Endothelial cell of umbilical vein (primary cell): ENCODE measurements at regions of chr2 and their contacts with region 1.

Region 1: DNA sequence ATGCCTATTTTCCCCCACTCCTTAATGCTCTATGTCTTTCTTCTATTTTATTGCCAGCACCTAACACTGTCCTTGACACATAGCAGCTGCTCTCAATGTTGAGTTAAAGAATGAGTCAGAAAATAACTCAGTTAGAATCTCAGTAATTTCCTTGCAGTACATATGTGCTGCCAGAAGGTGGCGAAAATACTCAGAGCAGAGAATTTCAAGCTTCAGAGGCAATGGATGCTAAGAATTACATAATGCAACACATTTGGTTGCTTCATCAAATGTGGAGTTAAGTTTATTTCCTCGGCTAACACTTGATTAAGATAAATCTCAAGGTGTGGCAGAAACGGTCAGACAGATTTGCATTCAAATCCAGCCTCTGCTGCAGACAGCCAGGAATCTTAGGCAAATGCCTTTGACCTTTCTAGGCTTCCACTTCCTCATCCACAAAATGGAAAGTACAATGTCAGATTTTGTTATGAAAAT is 105.6 kb downstream of the VSNL1 start:
- DNase-seq: peak; percentile 77
- H3K4me3 ChIP-seq: no peak overlapping the region
- H3K27ac ChIP-seq: no peak overlapping the region
- H3K4me1 ChIP-seq: peaks cover 8% of the 10 kb centered on the region
- H3K27me3 ChIP-seq: no peaks in the 10 kb centered on the region
- CTCF ChIP-seq: peak; percentile 53 to 59
- POLR2A ChIP-seq: no peak

Region 2: GRCh38 chr2:16773080-16773713 is 872.9 kb before region 1 on chr2:
- CTCF ChIA-PET with region 1: interaction called, 5 read pairs
- POLR2A ChIA-PET with region 1: no interaction called
- dilution Hi-C with region 1: no loop called
- intact Hi-C with region 1: loop called (anchors 10 kb)
- DNase-seq: peak; percentile 34
- H3K4me3 ChIP-seq: no peak overlapping the region
- H3K27ac ChIP-seq: no peak overlapping the region
- H3K4me1 ChIP-seq: no peaks in the 10 kb centered on the region
- H3K27me3 ChIP-seq: no peaks in the 10 kb centered on the region
- CTCF ChIP-seq: peak; percentile 31 to 38
- POLR2A ChIP-seq: no peak

Region 3: DNA sequence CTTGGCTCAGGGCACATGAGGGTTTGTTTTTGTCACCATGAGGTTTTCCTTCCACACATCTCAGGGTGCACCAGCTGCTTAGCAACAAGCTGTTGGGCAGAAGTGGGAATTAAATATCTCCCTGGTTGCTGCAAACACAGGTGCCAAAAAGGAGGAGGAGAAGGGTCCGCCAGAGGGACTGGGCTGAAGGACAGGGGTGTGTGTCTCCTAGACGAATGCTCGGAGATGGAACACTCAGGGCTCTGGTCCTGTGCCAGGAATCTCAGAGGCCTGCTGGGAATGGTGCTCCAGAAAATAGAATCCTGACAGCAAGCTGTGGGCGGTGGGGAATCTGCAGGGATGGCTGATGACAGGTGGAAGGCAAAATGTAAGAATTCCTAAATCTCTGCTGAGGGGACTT is 11.1 kb before region 1 on chr2:
- CTCF ChIA-PET with region 1: interaction called, 34 read pairs
- POLR2A ChIA-PET with region 1: no interaction called
- dilution Hi-C with region 1: no loop called
- intact Hi-C with region 1: no loop called
- DNase-seq: no peak
- H3K4me3 ChIP-seq: no peak overlapping the region
- H3K27ac ChIP-seq: no peak overlapping the region
- H3K4me1 ChIP-seq: no peaks in the 10 kb centered on the region
- H3K27me3 ChIP-seq: no peaks in the 10 kb centered on the region
- CTCF ChIP-seq: no peak
- POLR2A ChIP-seq: no peak

Region 4: DNA sequence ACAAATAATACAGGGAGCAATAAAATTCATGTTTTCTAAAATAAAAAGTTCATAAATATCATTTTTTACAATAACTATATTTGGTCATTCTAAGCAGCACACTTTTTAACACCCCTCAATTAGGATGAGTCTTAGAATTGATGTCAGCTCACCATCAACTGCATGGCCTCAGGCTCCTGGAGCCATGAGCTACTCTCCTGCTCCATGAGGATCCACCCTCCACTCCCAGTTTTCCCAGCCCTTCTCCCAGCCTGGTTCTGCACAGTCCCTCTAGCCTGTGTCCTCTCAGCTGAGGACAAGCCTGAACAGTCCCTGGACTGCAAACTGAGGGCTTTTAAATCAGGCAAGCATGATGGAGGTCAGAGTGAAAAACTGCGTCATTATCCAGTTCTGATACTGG is 18.4 kb after region 1 on chr2:
- CTCF ChIA-PET with region 1: interaction called, 296 read pairs
- POLR2A ChIA-PET with region 1: no interaction called
- dilution Hi-C with region 1: no loop called
- intact Hi-C with region 1: no loop called
- DNase-seq: no peak
- H3K4me3 ChIP-seq: no peak overlapping the region
- H3K27ac ChIP-seq: no peak overlapping the region
- H3K4me1 ChIP-seq: no peaks in the 10 kb centered on the region
- H3K27me3 ChIP-seq: no peaks in the 10 kb centered on the region
- CTCF ChIP-seq: no peak
- POLR2A ChIP-seq: no peak

Region 5: GRCh38 chr2:17830053-17831034 is 184.2 kb after region 1 on chr2:
- CTCF ChIA-PET with region 1: interaction called, 3 read pairs
- POLR2A ChIA-PET with region 1: no interaction called
- dilution Hi-C with region 1: no loop called
- intact Hi-C with region 1: loop called (anchors 2 kb)
- DNase-seq: peak; percentile 89
- H3K4me3 ChIP-seq: no peak overlapping the region
- H3K27ac ChIP-seq: no peak overlapping the region
- H3K4me1 ChIP-seq: no peaks in the 10 kb centered on the region
- H3K27me3 ChIP-seq: peaks cover 8 to 30% of the 10 kb centered on the region in 2 experiments
- CTCF ChIP-seq: peak; percentile 95 to 98
- POLR2A ChIP-seq: no peak

Region 6: DNA sequence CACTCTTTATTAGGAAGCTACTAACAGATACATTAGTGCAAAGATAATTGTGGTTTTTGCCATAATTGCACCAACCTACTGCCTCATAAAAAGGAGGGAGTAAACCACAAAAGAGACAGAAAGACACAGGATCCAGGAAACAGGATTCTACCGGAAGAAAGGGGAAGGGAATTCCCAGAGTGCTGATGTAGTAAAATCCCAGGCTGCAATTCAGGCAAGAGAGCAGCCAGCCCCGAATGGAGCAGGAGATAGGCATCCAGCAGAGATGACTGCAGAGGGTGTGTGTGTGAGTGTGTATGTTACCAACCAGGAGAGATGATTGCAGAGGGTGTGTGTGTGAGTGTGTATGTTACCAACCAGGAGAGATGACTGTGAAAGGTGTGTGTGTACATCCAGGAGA is 316.8 kb after region 1 on chr2:
- CTCF ChIA-PET with region 1: no interaction called
- POLR2A ChIA-PET with region 1: no interaction called
- dilution Hi-C with region 1: no loop called
- intact Hi-C with region 1: no loop called
- DNase-seq: no peak
- H3K4me3 ChIP-seq: no peak overlapping the region
- H3K27ac ChIP-seq: no peak overlapping the region
- H3K4me1 ChIP-seq: no peaks in the 10 kb centered on the region
- H3K27me3 ChIP-seq: no peaks in the 10 kb centered on the region
- CTCF ChIP-seq: no peak
- POLR2A ChIP-seq: no peak

Region 7: DNA sequence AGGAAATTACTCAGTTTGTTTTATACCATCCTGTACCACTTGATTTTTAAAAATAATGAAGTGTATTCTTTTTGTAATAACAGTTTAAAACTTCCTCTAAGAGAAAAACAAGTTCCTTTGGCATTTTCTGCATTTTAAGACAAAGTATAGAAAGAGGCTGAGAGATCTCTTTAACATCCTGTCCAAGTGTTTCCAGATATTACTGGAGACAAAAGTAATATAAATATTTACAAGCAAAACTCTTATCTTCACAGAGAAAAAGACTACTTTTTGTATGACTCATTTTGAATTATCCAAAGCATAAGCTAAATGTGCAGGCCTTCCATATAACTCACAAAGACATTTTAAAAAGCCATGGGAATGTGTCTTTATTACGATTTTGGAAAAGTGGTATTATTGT is 693.2 kb after region 1 on chr2:
- CTCF ChIA-PET with region 1: no interaction called
- POLR2A ChIA-PET with region 1: no interaction called
- dilution Hi-C with region 1: no loop called
- intact Hi-C with region 1: no loop called
- DNase-seq: peak; percentile 78
- H3K4me3 ChIP-seq: no peak overlapping the region
- H3K27ac ChIP-seq: peak overlapping the region; percentile 58
- H3K4me1 ChIP-seq: peaks cover 36% of the 10 kb centered on the region
- H3K27me3 ChIP-seq: no peaks in the 10 kb centered on the region
- CTCF ChIP-seq: no peak
- POLR2A ChIP-seq: no peak